Ascending aorta (tissue), 2 donors: ENCODE measurements at regions of chr12 and their contacts with region 1.

Region 1: DNA sequence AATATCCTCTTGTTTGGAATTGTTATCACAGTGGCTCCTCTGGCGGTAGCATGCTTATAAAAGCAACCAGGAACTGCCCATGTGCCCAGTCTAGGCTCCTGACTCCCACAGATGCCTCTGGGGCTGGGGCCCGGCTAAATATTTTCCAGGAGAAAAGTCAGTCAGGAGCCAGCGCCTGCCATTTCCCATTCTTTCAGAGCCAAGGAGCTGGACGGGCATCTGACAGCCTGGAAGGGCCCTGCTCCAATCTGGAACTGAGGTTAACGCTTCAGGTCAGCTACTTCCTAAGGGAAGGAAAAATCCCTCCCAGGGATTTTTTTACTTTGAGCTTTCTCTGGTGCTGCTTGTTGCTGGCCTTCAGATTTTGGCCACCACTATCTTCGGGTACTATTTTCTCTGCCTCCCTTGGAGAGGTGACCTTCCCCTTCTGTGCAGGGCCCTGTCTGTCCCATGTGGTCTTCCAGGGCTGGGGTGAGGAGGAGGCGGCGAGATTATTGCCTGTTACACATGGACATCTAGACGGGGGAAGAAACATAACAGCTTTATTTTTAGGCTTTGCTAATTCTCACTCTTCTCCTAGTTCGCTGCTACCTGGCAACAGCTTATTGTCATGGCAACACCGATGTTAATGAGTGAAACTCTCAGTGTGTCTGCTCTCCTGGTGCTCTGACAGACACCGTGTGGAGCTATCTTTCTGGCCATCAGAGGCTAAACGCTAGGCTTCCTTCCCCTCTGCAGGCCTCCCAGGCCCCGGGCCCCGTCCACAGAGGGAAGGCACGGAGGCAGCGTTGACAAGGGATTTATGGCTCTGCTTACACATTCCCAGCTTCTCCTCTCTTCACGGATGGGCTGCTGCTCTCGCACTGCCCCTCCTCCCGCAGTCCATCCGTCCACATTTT is 160.4 kb downstream of the CACNA1C start:
- DNase-seq: no peak
- H3K4me3 ChIP-seq: no peak overlapping the region
- H3K27ac ChIP-seq: peak overlapping the region; percentile 43 to 54
- H3K4me1 ChIP-seq: peaks cover 0 to 12% of the 10 kb centered on the region in 2 donors
- H3K27me3 ChIP-seq: no peaks in the 10 kb centered on the region
- CTCF ChIP-seq: no peak

Region 2: DNA sequence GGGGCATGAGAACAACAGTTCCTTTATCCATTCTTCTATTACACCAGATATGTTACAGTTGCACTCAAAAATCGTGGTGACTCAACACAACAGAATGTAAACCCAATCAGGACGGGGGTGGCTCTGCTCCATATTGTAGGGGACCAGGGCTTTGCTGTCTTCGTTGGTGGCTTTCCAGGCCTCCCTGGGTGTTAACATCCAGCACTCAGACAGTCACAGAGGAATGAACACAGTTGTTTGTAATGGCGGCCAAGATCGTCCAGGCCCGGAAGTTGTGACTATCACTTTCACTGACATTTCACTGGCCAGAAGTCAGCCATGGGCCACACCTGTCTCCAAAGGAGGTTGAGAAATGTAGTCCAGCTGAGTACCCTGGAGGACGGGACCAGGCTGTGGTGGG is 43.7 kb after region 1 on chr12:
- intact Hi-C with region 1: loop called (anchors 5 kb)
- DNase-seq: no peak
- H3K4me3 ChIP-seq: no peak overlapping the region
- H3K27ac ChIP-seq: no peak overlapping the region
- H3K4me1 ChIP-seq: peaks cover 0 to 23% of the 10 kb centered on the region in 2 donors
- H3K27me3 ChIP-seq: no peaks in the 10 kb centered on the region
- CTCF ChIP-seq: no peak

Region 3: GRCh38 chr12:2372735-2373134 is 159.5 kb after region 1 on chr12:
- intact Hi-C with region 1: no loop called
- DNase-seq: peak in 1 of 2 donors; percentile 86
- H3K4me3 ChIP-seq: no peak overlapping the region
- H3K27ac ChIP-seq: no peak overlapping the region
- H3K4me1 ChIP-seq: peaks cover 0 to 17% of the 10 kb centered on the region in 2 donors
- H3K27me3 ChIP-seq: no peaks in the 10 kb centered on the region
- CTCF ChIP-seq: no peak